Activated CD4-positive, alpha-beta memory T cell treated with anti-CD3 and anti-CD28 coated beads, Interleukin-2, amount 10 ng/mL, durations not matched to agents 7 days and 5 days (primary cell): ENCODE measurements at regions of chr1 and their contacts with region 1.

Region 1: DNA sequence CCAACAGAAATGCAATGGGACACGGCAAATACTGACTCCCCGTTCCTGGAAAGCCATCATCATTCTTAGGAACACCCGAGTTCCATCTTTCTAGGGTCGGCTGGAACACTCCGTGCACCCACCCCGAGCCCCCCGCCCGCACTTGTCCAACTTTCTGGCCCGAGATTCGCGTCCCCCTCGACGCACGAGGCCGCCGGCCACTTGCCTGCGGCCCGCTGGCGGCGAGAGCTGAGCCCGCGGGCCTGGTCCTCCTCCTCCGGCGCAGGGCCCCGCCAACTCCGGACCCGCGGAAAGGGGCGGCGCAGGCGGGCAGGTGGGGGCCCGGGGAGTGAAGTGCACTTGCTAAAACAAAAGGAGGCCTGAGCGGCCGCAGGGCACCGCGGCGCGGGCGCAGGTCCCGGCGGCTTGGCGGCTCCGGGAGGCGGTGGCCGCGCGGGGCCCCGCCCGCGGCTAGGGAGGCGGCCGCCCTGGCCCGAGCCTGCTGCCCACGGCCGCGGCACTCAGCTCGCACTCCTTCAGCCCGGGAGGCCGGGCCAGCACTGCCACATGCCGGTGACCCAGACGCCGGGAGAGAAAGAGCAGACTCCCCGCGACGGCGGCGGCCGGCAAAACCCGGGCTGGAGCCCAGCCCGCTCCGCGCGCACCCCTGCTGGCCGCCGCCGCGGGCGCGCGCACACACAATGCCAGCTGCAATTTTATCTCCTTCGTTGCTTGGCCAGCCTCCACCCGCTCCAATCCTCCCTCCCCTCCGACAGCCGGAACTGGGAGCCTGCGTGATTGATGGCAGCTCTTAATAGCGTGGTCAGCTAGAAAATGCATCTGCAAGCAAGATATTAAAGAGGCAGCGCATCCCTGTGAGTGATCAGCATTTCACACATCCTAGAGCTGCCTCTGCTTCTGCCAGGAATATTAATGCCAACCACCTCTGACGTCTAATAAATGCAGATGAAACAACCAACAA is 114.3 kb downstream of the RERE start:
- DNase-seq: peak; percentile 79
- H3K4me3 Mint-ChIP-seq: peak overlapping the region; percentile 88
- H3K27ac Mint-ChIP-seq: peak overlapping the region; percentile 76
- H3K4me1 Mint-ChIP-seq: peaks cover 47% of the 10 kb centered on the region
- H3K27me3 Mint-ChIP-seq: peaks cover 21% of the 10 kb centered on the region

Region 2: DNA sequence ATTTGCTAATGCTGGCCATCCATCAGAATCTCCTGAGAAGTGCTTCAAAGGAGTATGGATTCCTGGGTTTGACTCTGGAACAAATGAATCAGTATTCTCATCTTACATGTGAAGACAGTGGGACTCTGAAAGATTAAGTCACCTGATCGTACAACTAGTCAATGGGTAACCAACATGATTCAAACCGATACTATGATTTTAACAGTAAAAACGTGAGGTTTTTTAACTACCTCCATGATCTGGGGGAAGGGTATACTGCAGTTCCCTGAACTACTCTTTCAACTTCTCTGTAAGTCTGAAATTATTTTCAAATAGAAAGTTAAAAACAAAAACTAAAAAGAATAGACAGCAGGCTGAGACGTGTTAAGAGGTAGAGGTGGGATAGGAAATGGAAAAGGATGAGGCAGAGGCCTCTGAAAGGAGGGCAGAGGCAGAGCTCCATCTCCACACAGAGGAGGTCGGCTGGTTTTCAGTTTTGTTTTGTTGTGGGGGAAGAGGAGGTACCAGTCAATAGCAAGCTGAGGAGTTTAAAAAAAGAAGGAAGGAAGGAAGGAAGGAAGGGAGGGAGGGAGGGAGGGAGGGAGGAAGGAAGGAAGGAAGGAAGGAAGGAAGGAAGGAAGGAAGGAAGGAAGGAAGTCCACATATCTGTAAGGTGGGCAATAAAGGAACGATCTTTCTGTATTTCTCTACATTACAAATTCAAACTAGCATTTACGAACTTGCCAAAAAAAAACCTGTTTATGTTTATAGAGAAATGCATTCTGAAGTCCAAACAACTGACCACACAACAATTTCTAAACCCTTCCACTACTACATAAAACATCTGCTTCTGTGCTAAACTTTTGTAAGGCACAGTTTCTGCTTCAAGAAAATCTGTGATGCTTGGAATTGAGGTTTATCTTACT is 98.8 kb before region 1 on chr1:
- CTCF ChIA-PET with region 1: interaction called, 10 read pairs
- POLR2A ChIA-PET with region 1: interaction called, 5 read pairs
- DNase-seq: peak; percentile 53
- H3K4me3 Mint-ChIP-seq: peak overlapping the region; percentile 72
- H3K27ac Mint-ChIP-seq: peak overlapping the region; percentile 95
- H3K4me1 Mint-ChIP-seq: peaks cover 47% of the 10 kb centered on the region
- H3K27me3 Mint-ChIP-seq: no peaks in the 10 kb centered on the region

Region 3: DNA sequence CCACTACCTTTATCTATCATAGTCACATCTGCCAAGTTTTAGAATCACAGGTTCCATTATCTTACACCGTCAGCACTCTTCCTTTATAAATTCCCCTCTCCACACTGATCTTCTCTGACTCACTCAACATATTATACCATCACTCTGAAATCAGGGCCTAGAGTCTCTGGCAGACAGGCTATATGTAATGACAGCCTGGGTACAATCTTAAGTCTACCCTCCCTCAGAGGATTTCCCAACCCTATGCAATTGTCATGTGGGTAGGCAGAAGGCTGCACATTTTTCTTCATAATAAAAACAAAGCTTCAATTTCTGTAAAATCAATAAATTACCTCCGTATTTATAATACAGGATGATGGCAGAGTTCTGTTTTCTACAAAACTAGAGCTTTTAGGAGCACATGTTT is 23.7 kb before region 1 on chr1:
- CTCF ChIA-PET with region 1: interaction called, 8 read pairs
- POLR2A ChIA-PET with region 1: interaction called, 12 read pairs
- DNase-seq: no peak
- H3K4me3 Mint-ChIP-seq: no peak overlapping the region
- H3K27ac Mint-ChIP-seq: no peak overlapping the region
- H3K4me1 Mint-ChIP-seq: peaks cover 24% of the 10 kb centered on the region
- H3K27me3 Mint-ChIP-seq: no peaks in the 10 kb centered on the region

Region 4: GRCh38 chr1:8718850-8719361 is 15.8 kb after region 1 on chr1:
- CTCF ChIA-PET with region 1: interaction called, 5 read pairs
- POLR2A ChIA-PET with region 1: interaction called, 39 read pairs
- DNase-seq: no peak
- H3K4me3 Mint-ChIP-seq: no peak overlapping the region
- H3K27ac Mint-ChIP-seq: no peak overlapping the region
- H3K4me1 Mint-ChIP-seq: peaks cover 34% of the 10 kb centered on the region
- H3K27me3 Mint-ChIP-seq: no peaks in the 10 kb centered on the region

Region 5: GRCh38 chr1:8727809-8728213 is 24.7 kb after region 1 on chr1:
- CTCF ChIA-PET with region 1: interaction called, 24 read pairs
- POLR2A ChIA-PET with region 1: interaction called, 12 read pairs
- DNase-seq: no peak
- H3K4me3 Mint-ChIP-seq: no peak overlapping the region
- H3K27ac Mint-ChIP-seq: no peak overlapping the region
- H3K4me1 Mint-ChIP-seq: peaks cover 21% of the 10 kb centered on the region
- H3K27me3 Mint-ChIP-seq: no peaks in the 10 kb centered on the region